SK-N-SH (cell line): ENCODE measurements at regions of chr2 and their contacts with region 1.

Region 1: GRCh38 chr2:85162746-85163301 is 29.6 kb downstream of the TCF7L1 start:
- DNase-seq: no peak
- H3K4me3 ChIP-seq: no peak overlapping the region
- H3K27ac ChIP-seq: no peak overlapping the region
- H3K4me1 ChIP-seq: peaks cover 0 to 48% of the 10 kb centered on the region in 2 experiments; a peak in 3 of 4 replicates
- H3K27me3 ChIP-seq: no peaks in the 10 kb centered on the region
- CTCF ChIP-seq: no peak
- EP300 ChIP-seq: no peak
- RAD21 ChIP-seq: no peak

Region 2: DNA sequence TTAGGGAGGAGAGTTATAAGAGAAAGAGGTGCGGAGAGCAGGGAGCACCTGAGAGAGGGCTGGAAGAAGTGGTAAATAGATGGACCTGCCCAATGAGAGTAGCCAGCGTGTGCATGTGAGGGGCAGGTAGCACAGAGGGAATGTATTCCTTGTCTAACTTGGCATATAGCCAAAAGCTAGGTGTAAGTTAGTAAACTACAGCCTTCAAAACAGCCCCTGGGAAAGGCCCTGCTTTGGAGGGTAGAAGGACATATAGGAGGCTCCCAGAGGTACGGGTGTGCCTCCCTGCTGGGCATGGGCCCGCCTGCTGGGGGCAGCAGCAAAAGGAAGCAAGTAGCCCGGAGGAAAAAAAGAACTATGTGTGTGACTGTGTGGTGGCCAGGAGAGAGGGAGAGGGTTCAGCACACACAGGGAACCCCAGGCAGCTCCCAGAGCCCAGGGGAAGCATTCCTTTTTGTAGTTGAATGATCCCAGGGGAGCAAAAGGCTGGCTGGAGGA is 18.4 kb after region 1 on chr2:
- CTCF ChIA-PET with region 1: interaction called, 17 read pairs
- POLR2A ChIA-PET with region 1: no interaction called
- DNase-seq: no peak
- H3K4me3 ChIP-seq: no peak overlapping the region
- H3K27ac ChIP-seq: no peak overlapping the region
- H3K4me1 ChIP-seq: no peaks in the 10 kb centered on the region; a peak in 2 of 4 replicates
- H3K27me3 ChIP-seq: no peaks in the 10 kb centered on the region
- CTCF ChIP-seq: 0 out of 2 replicates have a peak, but pooled peaks have one; percentile 9
- EP300 ChIP-seq: no peak
- RAD21 ChIP-seq: 0 out of 2 replicates have a peak, but pooled peaks have one; percentile 3

Region 3: GRCh38 chr2:85248773-85249509 is 86.1 kb after region 1 on chr2:
- CTCF ChIA-PET with region 1: interaction called, 10 read pairs
- POLR2A ChIA-PET with region 1: no interaction called
- DNase-seq: no peak
- H3K4me3 ChIP-seq: no peak overlapping the region
- H3K27ac ChIP-seq: peak overlapping the region; percentile 63 to 64; a peak in 3 of 4 replicates
- H3K4me1 ChIP-seq: peaks cover 35 to 38% of the 10 kb centered on the region in 2 experiments
- H3K27me3 ChIP-seq: no peaks in the 10 kb centered on the region
- CTCF ChIP-seq: no peak
- EP300 ChIP-seq: peak in 1 of 2 experiments; percentile 64; a peak in 1 of 4 replicates
- RAD21 ChIP-seq: no peak